HCT116 (cell line): ENCODE measurements at regions of chr2 and their contacts with region 1.

Region 1: DNA sequence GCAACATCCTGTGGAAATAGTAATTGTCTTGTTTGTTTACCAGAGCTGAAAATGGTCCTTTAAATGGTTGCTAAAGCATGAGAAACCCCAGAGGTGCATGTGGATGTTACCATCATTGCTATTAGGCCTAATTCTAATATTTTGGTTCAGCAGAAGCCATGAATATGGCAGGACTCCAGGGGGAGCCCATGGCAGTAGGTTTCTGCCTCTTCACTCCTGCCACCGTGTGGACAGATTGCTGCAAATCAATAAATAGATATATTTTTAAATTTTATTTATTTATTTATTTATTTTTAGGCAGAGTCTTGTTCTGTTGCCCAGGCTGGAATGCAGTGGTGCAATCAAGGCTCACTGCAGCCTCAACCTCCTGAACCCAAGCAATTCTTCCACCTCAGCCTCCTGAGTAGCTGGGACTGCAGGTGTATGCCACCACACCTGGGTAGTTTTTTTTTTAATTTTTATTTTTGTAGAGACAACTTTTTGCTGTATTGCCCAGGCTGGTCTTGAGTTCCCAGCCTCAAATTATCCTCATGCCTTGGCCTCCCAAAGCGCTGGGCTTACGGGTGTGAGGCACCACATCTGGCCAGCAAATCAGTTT is 54.9 kb upstream of the CAPN13 start:
- DNase-seq: peak; percentile 55
- ATAC-seq: peak; percentile 55
- H3K4me3 ChIP-seq: no peak overlapping the region
- H3K27ac ChIP-seq: no peak overlapping the region
- H3K4me1 ChIP-seq: no peaks in the 10 kb centered on the region
- H3K27me3 ChIP-seq: peaks cover 6% of the 10 kb centered on the region; the same call in 1 of the 2 replicates
- CTCF ChIP-seq: peak; percentile 52 to 99 (median 77)
- POLR2A ChIP-seq: no peak
- RAD21 ChIP-seq: peak; percentile 67

Region 2: GRCh38 chr2:30756047-30756719 is 106.0 kb before region 1 on chr2:
- CTCF ChIA-PET with region 1: no interaction called
- POLR2A ChIA-PET with region 1: no interaction called
- RAD21 ChIA-PET with region 1: no interaction called
- intact Hi-C with region 1: no loop called
- DNase-seq: no peak
- ATAC-seq: peak; percentile 59
- H3K4me3 ChIP-seq: no peak overlapping the region
- H3K27ac ChIP-seq: no peak overlapping the region
- H3K4me1 ChIP-seq: peaks cover 0 to 10% of the 10 kb centered on the region in 2 experiments; a peak in 2 of 4 replicates
- H3K27me3 ChIP-seq: peaks cover 62% of the 10 kb centered on the region
- CTCF ChIP-seq: no peak
- POLR2A ChIP-seq: no peak
- RAD21 ChIP-seq: no peak

Region 3: DNA sequence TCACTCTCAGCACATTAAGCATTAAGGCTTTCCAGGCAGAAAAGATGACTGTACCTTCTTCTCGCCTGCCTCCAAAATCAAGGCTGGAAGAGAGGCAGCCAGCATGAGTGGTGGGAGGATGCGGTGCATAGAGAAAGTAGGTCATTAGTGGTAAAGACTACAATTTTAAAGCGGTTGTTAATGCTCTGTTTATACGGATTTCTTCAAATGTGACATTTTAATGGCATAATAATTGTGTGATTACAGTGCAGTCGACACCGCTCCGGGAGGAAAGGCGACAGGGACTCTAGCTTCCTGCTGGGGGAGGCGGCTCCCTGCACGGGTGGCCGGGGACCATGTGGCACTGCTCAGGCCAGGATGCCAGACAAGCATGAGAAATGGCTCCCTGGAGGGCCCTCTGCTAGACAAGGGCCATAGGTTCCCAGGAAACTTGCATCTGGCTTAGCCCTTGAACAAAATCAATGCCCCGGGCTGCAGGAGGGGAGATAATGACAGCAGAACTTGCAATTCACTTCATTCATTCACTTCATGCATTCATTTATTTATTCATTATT is 146.5 kb after region 1 on chr2:
- CTCF ChIA-PET with region 1: no interaction called
- POLR2A ChIA-PET with region 1: no interaction called
- RAD21 ChIA-PET with region 1: no interaction called
- intact Hi-C with region 1: no loop called
- DNase-seq: no peak
- ATAC-seq: no peak
- H3K4me3 ChIP-seq: no peak overlapping the region
- H3K27ac ChIP-seq: no peak overlapping the region
- H3K4me1 ChIP-seq: no peaks in the 10 kb centered on the region
- H3K27me3 ChIP-seq: peaks cover 5% of the 10 kb centered on the region; the same call in 1 of the 2 replicates
- CTCF ChIP-seq: no peak
- POLR2A ChIP-seq: no peak
- RAD21 ChIP-seq: no peak

Region 4: DNA sequence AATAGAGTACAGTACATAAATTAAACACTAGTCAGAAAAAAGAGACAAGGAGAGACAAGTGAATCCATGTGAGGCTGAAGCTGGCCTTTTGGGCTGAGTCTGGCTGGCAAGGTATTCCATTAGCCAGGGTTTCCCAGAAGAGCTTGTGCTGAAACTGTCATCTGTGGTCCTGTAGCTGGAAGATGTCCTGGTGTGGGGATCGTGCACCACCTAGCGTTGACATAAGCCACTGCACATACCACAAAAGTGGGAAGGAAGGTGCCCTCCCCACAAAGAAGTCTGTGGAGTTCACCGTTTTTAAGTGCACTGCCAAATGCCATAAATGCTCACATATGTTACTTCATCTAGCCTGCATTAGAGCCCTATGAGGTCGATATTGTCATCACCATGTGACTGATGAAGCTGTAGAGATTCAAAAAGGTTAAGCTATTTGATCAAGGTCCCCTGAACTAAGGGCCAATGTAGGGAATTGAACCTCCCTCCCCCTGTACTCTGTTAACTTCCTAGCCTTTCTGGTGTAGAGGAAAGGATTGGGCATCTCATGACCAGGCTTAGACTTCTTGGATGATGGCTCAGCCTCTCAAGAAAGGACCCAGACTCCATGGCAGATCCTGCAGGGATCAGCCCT is 308.0 kb after region 1 on chr2:
- CTCF ChIA-PET with region 1: interaction called, 28 read pairs
- POLR2A ChIA-PET with region 1: no interaction called
- RAD21 ChIA-PET with region 1: interaction called in 1 of 2 experiments, 5 read pairs
- intact Hi-C with region 1: loop called (anchors 1 kb)
- DNase-seq: peak; percentile 40
- ATAC-seq: peak; percentile 97
- H3K4me3 ChIP-seq: no peak overlapping the region
- H3K27ac ChIP-seq: no peak overlapping the region
- H3K4me1 ChIP-seq: no peaks in the 10 kb centered on the region
- H3K27me3 ChIP-seq: peaks cover 21% of the 10 kb centered on the region; the same call in 1 of the 2 replicates
- CTCF ChIP-seq: peak; percentile 86 to 92 (median 90)
- POLR2A ChIP-seq: no peak
- RAD21 ChIP-seq: peak; percentile 89